K562 (cell line): ENCODE measurements at regions of chr1 and their contacts with region 1.

Region 1: DNA sequence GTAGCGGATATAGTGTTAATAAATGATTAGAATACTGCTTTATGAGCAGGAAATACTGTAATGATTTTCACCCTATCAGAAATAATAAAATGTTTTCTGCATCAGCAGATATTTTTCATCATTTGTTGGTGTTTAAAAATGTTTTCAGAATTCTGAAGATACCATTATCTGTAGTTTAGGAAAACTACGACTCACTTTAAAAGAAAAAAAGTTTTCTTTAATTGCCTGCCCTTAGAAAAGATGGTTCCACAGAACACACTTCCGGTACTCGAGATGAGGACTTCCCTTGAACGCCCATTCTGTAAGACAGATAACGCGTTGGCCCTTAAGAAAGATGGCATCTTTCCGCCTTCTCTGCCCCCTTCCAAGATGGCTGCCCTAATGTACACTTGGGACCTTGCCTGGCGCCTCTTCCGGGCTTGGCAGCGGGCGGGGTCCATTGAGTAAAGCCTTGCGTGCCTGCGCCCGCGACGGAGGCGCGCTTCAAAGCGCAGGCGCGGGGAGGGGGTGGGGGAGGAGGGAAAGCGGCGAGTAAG is at the start of gene SZRD1:
- DNase-seq: peak; percentile 94 to 100 (median 96)
- ATAC-seq: peak; percentile 92
- H3K4me3 ChIP-seq: peak within 1 kb of the TSS; percentile 87
- H3K27ac ChIP-seq: peak within 1 kb of the TSS; percentile 94
- H3K4me1 ChIP-seq: peaks cover 7 to 14% of the 10 kb centered on the region in 2 experiments; a peak in 3 of 5 replicates
- H3K27me3 ChIP-seq: no peaks in the 10 kb centered on the region
- CTCF ChIP-seq: no peak
- EP300 ChIP-seq: peak; percentile 48; the same call in 1 of the 2 replicates
- POLR2A ChIP-seq: no peak
- RAD21 ChIP-seq: no peak; a peak in 1 of 4 replicates
- polyA plus RNA-seq, gene SZRD1: 3.9 to 7.2 TPM

Region 2: GRCh38 chr1:16078925-16079656 is 287.7 kb before region 1 on chr1:
- CTCF ChIA-PET with region 1: interaction called, 14 read pairs
- POLR2A ChIA-PET with region 1: no interaction called
- in situ Hi-C with region 1: loop called (anchors 5 kb)
- intact Hi-C with region 1: loop called (anchors 1 kb)
- DNase-seq: peak; percentile 71 to 87 (median 76)
- ATAC-seq: peak; percentile 84
- H3K4me3 ChIP-seq: no peak overlapping the region
- H3K27ac ChIP-seq: no peak overlapping the region
- H3K4me1 ChIP-seq: peaks cover 14 to 27% of the 10 kb centered on the region in 2 experiments; a peak in 4 of 5 replicates
- H3K27me3 ChIP-seq: peaks cover 0 to 3% of the 10 kb centered on the region in 2 experiments; a peak in 1 of 5 replicates
- CTCF ChIP-seq: peak; percentile 94 to 97 (median 97)
- EP300 ChIP-seq: no peak
- POLR2A ChIP-seq: no peak
- RAD21 ChIP-seq: peak; percentile 95 to 99

Region 3: DNA sequence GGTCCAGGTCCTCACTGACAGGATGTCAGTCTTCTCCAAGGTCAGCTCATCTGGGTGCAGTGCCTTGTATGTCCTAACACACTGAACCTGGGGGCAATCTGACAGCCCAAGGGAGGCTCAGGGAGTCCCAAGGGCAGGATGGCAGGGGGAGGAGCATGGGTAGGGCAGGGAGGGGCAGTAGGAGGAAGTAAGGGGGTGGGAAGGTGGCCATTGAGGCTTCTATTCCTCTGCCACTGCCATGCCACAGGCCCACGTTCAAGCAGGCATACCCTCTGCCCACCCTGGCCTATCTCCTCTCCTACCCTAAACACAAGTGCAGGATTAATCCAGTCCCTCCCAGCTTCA is 167.7 kb before region 1 on chr1:
- CTCF ChIA-PET with region 1: interaction called, 7 read pairs
- POLR2A ChIA-PET with region 1: no interaction called
- in situ Hi-C with region 1: loop called (anchors 5 kb)
- intact Hi-C with region 1: no loop called
- DNase-seq: no peak
- ATAC-seq: no peak
- H3K4me3 ChIP-seq: no peak overlapping the region
- H3K27ac ChIP-seq: no peak overlapping the region
- H3K4me1 ChIP-seq: peaks cover 5 to 9% of the 10 kb centered on the region in 2 experiments
- H3K27me3 ChIP-seq: no peaks in the 10 kb centered on the region
- CTCF ChIP-seq: no peak
- EP300 ChIP-seq: no peak
- POLR2A ChIP-seq: no peak
- RAD21 ChIP-seq: no peak

Region 4: GRCh38 chr1:16206547-16207317 is 160.1 kb before region 1 on chr1:
- CTCF ChIA-PET with region 1: interaction called, 7 read pairs
- POLR2A ChIA-PET with region 1: interaction called, 4 read pairs
- in situ Hi-C with region 1: no loop called
- intact Hi-C with region 1: loop called (anchors 1 kb)
- DNase-seq: peak; percentile 96 to 100 (median 96)
- ATAC-seq: peak; percentile 94
- H3K4me3 ChIP-seq: peak overlapping the region; percentile 54
- H3K27ac ChIP-seq: peak overlapping the region; percentile 97
- H3K4me1 ChIP-seq: peaks cover 26 to 53% of the 10 kb centered on the region in 2 experiments
- H3K27me3 ChIP-seq: no peaks in the 10 kb centered on the region
- CTCF ChIP-seq: 0 out of 6 replicates have a peak, but pooled peaks of 1 of the 3 experiments have one; percentile 2
- EP300 ChIP-seq: no peak
- POLR2A ChIP-seq: peak; percentile 97
- RAD21 ChIP-seq: 0 out of 4 replicates have a peak, but pooled peaks of 1 of the 2 experiments have one; percentile 2

Region 5: GRCh38 chr1:16243936-16244649 is 122.7 kb before region 1 on chr1:
- CTCF ChIA-PET with region 1: interaction called, 6 read pairs
- POLR2A ChIA-PET with region 1: interaction called, 8 read pairs
- in situ Hi-C with region 1: no loop called
- intact Hi-C with region 1: loop called (anchors 1 kb)
- DNase-seq: peak; percentile 77 to 91 (median 82)
- ATAC-seq: peak; percentile 79
- H3K4me3 ChIP-seq: no peak overlapping the region
- H3K27ac ChIP-seq: no peak overlapping the region
- H3K4me1 ChIP-seq: peaks cover 13 to 36% of the 10 kb centered on the region in 2 experiments
- H3K27me3 ChIP-seq: no peaks in the 10 kb centered on the region
- CTCF ChIP-seq: peak; percentile 92 to 98 (median 97)
- EP300 ChIP-seq: no peak
- POLR2A ChIP-seq: no peak
- RAD21 ChIP-seq: peak; percentile 92 to 93

Region 6: DNA sequence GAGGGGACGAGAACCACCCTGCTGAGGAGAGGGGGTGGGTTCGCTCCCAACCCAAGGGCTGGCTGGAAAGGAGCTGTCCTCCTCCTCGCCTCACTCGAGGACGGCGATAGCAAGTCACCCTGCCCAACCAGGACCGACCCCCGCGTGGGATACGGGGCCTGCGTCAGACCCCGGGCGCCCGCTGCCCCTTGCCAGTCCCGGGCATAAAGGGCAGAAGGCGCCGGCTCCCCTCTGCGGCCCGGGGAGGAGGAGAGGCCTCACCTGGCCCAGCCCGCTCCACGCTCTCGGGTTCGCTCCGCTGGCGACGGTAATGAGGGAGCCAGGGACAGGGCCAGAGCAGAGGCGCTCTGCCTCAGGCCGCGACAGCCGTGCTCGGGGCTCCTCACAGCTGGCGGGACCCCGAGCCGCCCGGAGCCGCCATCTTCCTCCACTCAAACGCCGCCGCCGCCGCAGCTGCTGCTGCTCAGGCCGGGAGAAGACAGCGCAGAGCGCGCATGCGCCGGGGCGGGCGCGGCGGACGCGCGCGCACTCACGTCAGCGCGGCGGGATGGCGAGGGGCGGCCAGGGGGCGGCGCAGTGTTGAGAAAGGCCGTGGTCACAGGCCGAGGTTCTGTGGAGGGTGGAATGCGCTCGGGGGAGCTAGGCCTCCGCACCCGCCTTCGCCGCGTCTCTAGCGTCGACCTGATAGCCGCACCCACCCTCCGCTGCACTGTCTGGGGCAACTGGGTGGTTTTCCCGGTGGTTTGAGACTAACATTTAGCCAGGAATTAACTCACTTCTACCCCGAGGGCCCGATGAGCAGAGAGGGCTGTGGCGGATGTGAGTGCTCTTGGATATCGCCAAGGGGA is 14.6 kb before region 1 on chr1 and contains the start of gene FBXO42:
- CTCF ChIA-PET with region 1: interaction called, 8 read pairs
- POLR2A ChIA-PET with region 1: interaction called, 33 read pairs
- in situ Hi-C with region 1: no loop called
- intact Hi-C with region 1: no loop called
- DNase-seq: peak; percentile 96 to 98 (median 96)
- ATAC-seq: peak; percentile 92
- H3K4me3 ChIP-seq: peak within 1 kb of the TSS; percentile 96
- H3K27ac ChIP-seq: peak within 1 kb of the TSS; percentile 88
- H3K4me1 ChIP-seq: peaks cover 19 to 25% of the 10 kb centered on the region in 2 experiments
- H3K27me3 ChIP-seq: no peaks in the 10 kb centered on the region
- CTCF ChIP-seq: peak; percentile 56 to 78 (median 73)
- EP300 ChIP-seq: no peak; the same call in none of the 2 replicates
- POLR2A ChIP-seq: peak; percentile 91
- RAD21 ChIP-seq: peak; percentile 34 to 46
- polyA plus RNA-seq, gene FBXO42: 7.2 to 8.0 TPM

Region 7: DNA sequence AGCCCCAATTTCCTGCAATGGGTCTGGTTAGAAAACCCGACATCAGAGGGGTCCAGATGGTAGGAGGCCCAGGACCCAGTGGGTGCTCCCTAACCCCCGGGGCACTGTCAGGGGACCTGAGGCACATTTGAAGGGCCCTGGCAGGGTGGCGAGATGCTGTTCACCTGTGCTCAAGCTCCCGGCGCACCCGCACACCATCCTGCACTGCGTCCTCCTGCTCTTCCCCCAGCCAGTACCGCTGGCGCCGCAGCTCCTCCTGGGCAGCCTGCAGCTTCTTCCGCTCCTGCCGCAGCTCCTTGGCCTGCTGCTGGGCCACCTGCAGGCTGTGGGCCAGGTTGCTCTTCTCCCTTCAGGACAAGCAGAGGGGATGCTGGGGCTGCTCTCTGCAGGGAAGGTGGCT is 111.3 kb after region 1 on chr1:
- CTCF ChIA-PET with region 1: no interaction called
- POLR2A ChIA-PET with region 1: no interaction called
- in situ Hi-C with region 1: no loop called
- intact Hi-C with region 1: no loop called
- DNase-seq: no peak
- ATAC-seq: no peak
- H3K4me3 ChIP-seq: no peak overlapping the region
- H3K27ac ChIP-seq: no peak overlapping the region
- H3K4me1 ChIP-seq: peaks cover 0 to 16% of the 10 kb centered on the region in 2 experiments; a peak in 1 of 5 replicates
- H3K27me3 ChIP-seq: no peaks in the 10 kb centered on the region
- CTCF ChIP-seq: no peak
- EP300 ChIP-seq: no peak
- POLR2A ChIP-seq: no peak
- RAD21 ChIP-seq: no peak

Region 8: GRCh38 chr1:16498573-16499413 is 132.0 kb after region 1 on chr1:
- CTCF ChIA-PET with region 1: no interaction called
- POLR2A ChIA-PET with region 1: no interaction called
- in situ Hi-C with region 1: no loop called
- intact Hi-C with region 1: loop called (anchors 5 kb)
- DNase-seq: peak; percentile 96 to 100 (median 99)
- ATAC-seq: peak; percentile 98
- H3K4me3 ChIP-seq: peak overlapping the region; percentile 73
- H3K27ac ChIP-seq: peak overlapping the region; percentile 62
- H3K4me1 ChIP-seq: peaks cover 3 to 24% of the 10 kb centered on the region in 2 experiments; a peak in 3 of 5 replicates
- H3K27me3 ChIP-seq: no peaks in the 10 kb centered on the region
- CTCF ChIP-seq: peak in 1 of 3 experiments; percentile 49; a peak in 3 of 6 replicates
- EP300 ChIP-seq: no peak
- POLR2A ChIP-seq: peak; percentile 41; the same call in 1 of the 2 replicates
- RAD21 ChIP-seq: peak in 1 of 2 experiments; percentile 21; a peak in 2 of 4 replicates